ENCODE measurements at regions of chr14 and their contacts with region 1.

Region 1: GRCh38 chr14:91277546-91278382 is 33.3 kb upstream of the GPR68 start:
- DNase-seq: peak in 1 of 6 donors; percentile 65
- ATAC-seq: no peak
- H3K4me3 ChIP-seq: no peak overlapping the region
- H3K27ac ChIP-seq: no peak overlapping the region
- H3K4me1 ChIP-seq: no peaks in the 10 kb centered on the region
- H3K27me3 ChIP-seq: no peaks in the 10 kb centered on the region
- CTCF ChIP-seq: no peak

Region 2: GRCh38 chr14:91185721-91186120 is 92.0 kb before region 1 on chr14:
- intact Hi-C with region 1: loop called in 1 of 3 experiments (anchors 10 kb)
- DNase-seq: no peak
- ATAC-seq: no peak
- H3K4me3 ChIP-seq: no peak overlapping the region
- H3K27ac ChIP-seq: no peak overlapping the region
- H3K4me1 ChIP-seq: no peaks in the 10 kb centered on the region
- H3K27me3 ChIP-seq: no peaks in the 10 kb centered on the region
- CTCF ChIP-seq: no peak